Motor neuron (in vitro differentiated cells): ENCODE measurements at regions of chr6 and their contacts with region 1.

Region 1: GRCh38 chr6:32589598-32590449 is at the start of gene HLA-DRB1:
- ATAC-seq: peak in 5 of 8 experiments; percentile 38 to 100 (median 99)
- H3K4me3 ChIP-seq: no peak within 1 kb of the TSS
- H3K27ac ChIP-seq: no peak within 1 kb of the TSS
- H3K4me1 ChIP-seq: no peaks in the 10 kb centered on the region
- total RNA-seq, gene HLA-DRB1: 3.1 to 80.7 TPM in 2 of 8 experiments, not detected in the others

Region 2: GRCh38 chr6:32529697-32530429 is 60.0 kb before region 1 on chr6 and contains the start of gene HLA-DRB5:
- in situ Hi-C with region 1: loop called in 2 of 9 experiments (anchors 10 kb)
- ATAC-seq: peak in 1 of 8 experiments; percentile 70
- H3K4me3 ChIP-seq: no peak within 1 kb of the TSS
- H3K27ac ChIP-seq: no peak within 1 kb of the TSS
- H3K4me1 ChIP-seq: no peaks in the 10 kb centered on the region
- total RNA-seq, gene HLA-DRB5: 54.5 TPM in 1 of 8 experiments, not detected in the others